ENCODE measurements at regions of chr10 and their contacts with region 1.

Region 1: DNA sequence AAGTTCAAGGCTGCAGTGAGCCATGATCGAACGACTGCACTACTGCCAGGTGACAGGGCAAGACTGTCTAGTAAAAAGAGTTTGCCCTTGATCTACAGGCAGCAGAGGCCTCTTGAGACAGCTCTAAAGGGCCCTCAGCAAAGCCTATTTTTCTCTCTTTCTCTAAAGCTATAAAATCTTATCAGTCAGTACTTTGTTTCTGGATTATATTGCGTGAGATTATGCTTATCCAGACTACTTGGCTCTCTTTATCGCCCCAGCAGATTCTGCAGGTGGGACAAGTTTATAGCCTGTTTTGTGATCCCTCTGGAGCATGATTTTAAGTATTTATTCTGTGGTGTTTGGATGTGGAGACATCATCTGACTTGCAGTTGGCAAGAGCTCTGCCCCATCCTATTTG is 2.7 kb downstream of the RPP38 start:
- DNase-seq: no peak
- H3K4me3 ChIP-seq: no peak overlapping the region
- H3K27ac ChIP-seq: no peak overlapping the region
- H3K4me1 ChIP-seq: peaks cover 19 to 27% of the 10 kb centered on the region in 2 donors
- H3K27me3 ChIP-seq: no peaks in the 10 kb centered on the region
- CTCF ChIP-seq: no peak
- POLR2A ChIP-seq: no peak

Region 2: GRCh38 chr10:14918964-14919363 is 180.9 kb before region 1 on chr10:
- intact Hi-C with region 1: no loop called
- DNase-seq: no peak
- H3K4me3 ChIP-seq: no peak overlapping the region
- H3K27ac ChIP-seq: no peak overlapping the region
- H3K4me1 ChIP-seq: no peaks in the 10 kb centered on the region
- H3K27me3 ChIP-seq: no peaks in the 10 kb centered on the region
- CTCF ChIP-seq: no peak
- POLR2A ChIP-seq: no peak

Region 3: GRCh38 chr10:14954001-14954770 is 145.7 kb before region 1 on chr10 and contains the start of gene DCLRE1C:
- intact Hi-C with region 1: loop called (anchors 5 kb)
- DNase-seq: peak; percentile 93 to 94
- H3K4me3 ChIP-seq: peak within 1 kb of the TSS; percentile 22 to 72 (median 68)
- H3K27ac ChIP-seq: peak within 1 kb of the TSS; percentile 49 to 84 (median 76)
- H3K4me1 ChIP-seq: peaks cover 11 to 16% of the 10 kb centered on the region in 2 donors
- H3K27me3 ChIP-seq: no peaks in the 10 kb centered on the region
- CTCF ChIP-seq: no peak
- POLR2A ChIP-seq: peak in 1 of 2 donors; percentile 70
- total RNA-seq, gene DCLRE1C: 14.9 to 19.2 (median 17.2) TPM

Region 4: GRCh38 chr10:15960277-15960676 is 860.4 kb after region 1 on chr10:
- intact Hi-C with region 1: no loop called
- DNase-seq: no peak
- H3K4me3 ChIP-seq: no peak overlapping the region
- H3K27ac ChIP-seq: no peak overlapping the region
- H3K4me1 ChIP-seq: no peaks in the 10 kb centered on the region
- H3K27me3 ChIP-seq: no peaks in the 10 kb centered on the region
- CTCF ChIP-seq: no peak
- POLR2A ChIP-seq: no peak